Motor neuron (in vitro differentiated cells): ENCODE measurements at regions of chr13 and their contacts with region 1.

Region 1: GRCh38 chr13:46721054-46721453 is 75.9 kb downstream of the ESD start:
- ATAC-seq: peak in 2 of 8 experiments; percentile 23 to 30
- H3K4me3 ChIP-seq: no peak overlapping the region
- H3K27ac ChIP-seq: no peak overlapping the region
- H3K4me1 ChIP-seq: no peaks in the 10 kb centered on the region

Region 2: DNA sequence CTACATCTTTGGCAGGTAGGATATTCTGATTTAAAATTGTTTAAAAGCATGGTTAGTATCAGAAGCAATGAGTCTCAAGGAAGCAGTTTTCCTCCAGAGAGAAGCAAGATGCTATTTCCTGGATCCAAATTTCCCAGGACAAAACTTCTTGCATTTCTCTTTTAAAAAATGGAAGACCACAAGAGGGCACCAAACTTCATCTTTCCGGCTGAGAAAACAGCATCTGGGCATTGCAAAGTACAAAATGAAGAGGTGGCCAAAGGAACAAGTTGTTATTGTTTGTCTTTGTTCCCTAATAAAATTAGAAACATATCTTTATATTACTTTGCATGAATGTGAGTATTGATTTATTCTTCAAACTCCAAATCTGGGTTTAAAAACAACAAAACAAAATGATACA is 228.1 kb before region 1 on chr13:
- in situ Hi-C with region 1: loop called in 3 of 9 experiments (anchors 10 to 25 kb)
- ATAC-seq: peak in 3 of 8 experiments; percentile 10 to 49 (median 41)
- H3K4me3 ChIP-seq: no peak overlapping the region
- H3K27ac ChIP-seq: no peak overlapping the region
- H3K4me1 ChIP-seq: no peaks in the 10 kb centered on the region

Region 3: GRCh38 chr13:46530084-46530935 is 190.7 kb before region 1 on chr13:
- in situ Hi-C with region 1: loop called in 2 of 9 experiments (anchors 25 kb)
- ATAC-seq: peak in 3 of 8 experiments; percentile 72 to 78 (median 76)
- H3K4me3 ChIP-seq: no peak overlapping the region
- H3K27ac ChIP-seq: no peak overlapping the region
- H3K4me1 ChIP-seq: peaks cover 18 to 32% of the 10 kb centered on the region in 2 donors

Region 4: DNA sequence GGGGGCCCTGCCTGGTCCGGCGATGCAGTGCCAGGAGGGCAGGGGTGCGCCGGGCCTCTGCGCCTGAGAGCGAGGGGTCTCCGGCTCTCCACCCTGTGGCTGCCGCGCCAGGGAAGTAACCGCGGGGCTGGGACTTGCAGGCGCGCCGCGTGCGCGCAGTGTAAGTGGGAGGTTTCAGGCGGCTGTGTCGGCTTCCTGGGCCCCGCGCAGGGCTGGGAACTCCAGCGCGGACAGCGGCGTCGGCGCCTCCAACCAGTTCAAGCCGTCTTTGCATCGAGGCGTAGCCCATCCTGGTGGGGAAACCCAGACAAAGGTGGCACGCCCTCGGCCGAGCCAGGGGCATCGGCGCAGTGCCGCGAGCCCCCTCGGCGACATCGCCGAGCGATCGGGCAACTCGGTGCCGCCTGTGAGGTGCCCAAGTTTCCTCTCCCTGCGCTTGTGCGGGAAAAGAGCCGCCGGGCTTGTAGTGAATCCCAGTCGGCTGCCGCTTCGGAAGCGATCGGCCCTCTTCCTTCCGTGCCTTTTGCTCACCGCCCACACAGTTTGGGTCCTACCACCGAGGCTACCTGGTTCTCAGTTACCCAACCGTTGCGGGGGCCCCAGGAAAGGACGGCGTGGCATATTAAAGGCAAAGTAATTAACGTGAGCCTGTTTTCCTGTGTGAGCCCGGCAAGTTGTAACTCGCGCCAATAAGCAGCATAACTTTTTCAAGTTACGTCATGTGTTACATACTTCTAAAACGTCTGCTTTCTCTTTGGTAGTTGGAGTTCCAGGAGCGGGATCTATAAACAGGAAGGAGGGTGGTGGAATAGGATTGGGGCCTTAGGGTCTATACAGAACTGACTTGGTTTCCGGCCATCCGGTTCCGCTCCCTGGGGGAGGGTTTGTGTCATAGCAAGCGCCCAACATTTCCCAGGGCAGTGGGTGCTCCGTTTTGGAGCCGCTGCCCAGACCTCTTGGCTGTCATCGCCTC is 166.9 kb before region 1 on chr13:
- in situ Hi-C with region 1: loop called in 3 of 9 experiments (anchors 10 to 25 kb)
- ATAC-seq: peak; percentile 52 to 66 (median 60)
- H3K4me3 ChIP-seq: peak overlapping the region; percentile 62 to 97 (median 80)
- H3K27ac ChIP-seq: peak overlapping the region; percentile 40 to 68
- H3K4me1 ChIP-seq: peaks cover 4 to 8% of the 10 kb centered on the region in 2 donors

Region 5: DNA sequence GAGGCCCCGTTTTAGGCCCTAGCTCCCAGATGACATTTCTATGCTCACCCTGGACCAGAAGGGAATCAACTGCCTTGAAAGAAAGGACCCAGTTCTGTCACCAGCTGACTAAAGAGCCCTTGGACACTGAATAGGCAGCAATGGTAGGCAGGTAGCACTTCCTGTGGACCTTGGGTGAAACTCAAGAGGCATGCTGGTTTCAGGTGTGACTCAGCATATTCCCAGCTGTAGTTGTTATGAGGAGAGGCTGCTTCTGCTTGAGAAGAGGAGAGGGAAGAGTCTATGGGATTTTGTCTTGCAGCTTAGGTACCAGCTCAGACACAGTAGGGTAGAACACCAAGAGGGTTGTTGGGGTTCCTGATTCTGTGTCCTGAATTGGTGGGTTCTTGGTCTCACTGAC is 213.7 kb after region 1 on chr13:
- in situ Hi-C with region 1: no loop called
- ATAC-seq: no peak
- H3K4me3 ChIP-seq: no peak overlapping the region
- H3K27ac ChIP-seq: no peak overlapping the region
- H3K4me1 ChIP-seq: no peaks in the 10 kb centered on the region